HepG2 (cell line): ENCODE measurements at regions of chrX and their contacts with region 1.

Region 1: GRCh38 chrX:48737213-48737938 is 24.2 kb upstream of the GLOD5 start:
- DNase-seq: peak; percentile 95
- ATAC-seq: peak; percentile 98
- H3K4me3 ChIP-seq: peak overlapping the region; percentile 41 to 72 (median 61); a peak in 5 of 6 replicates
- H3K27ac ChIP-seq: peak overlapping the region; percentile 85
- H3K4me1 ChIP-seq: peaks cover 28% of the 10 kb centered on the region
- H3K27me3 ChIP-seq: no peaks in the 10 kb centered on the region
- CTCF ChIP-seq: no peak
- EP300 ChIP-seq: no peak
- POLR2A ChIP-seq: peak; percentile 54 to 59; a peak in 2 of 4 replicates
- RAD21 ChIP-seq: no peak

Region 2: GRCh38 chrX:48451708-48452107 is 285.7 kb before region 1 on chrX:
- CTCF ChIA-PET with region 1: no interaction called
- POLR2A ChIA-PET with region 1: no interaction called
- in situ Hi-C with region 1: no loop called
- intact Hi-C with region 1: no loop called
- DNase-seq: no peak
- ATAC-seq: no peak
- H3K4me3 ChIP-seq: no peak overlapping the region
- H3K27ac ChIP-seq: no peak overlapping the region
- H3K4me1 ChIP-seq: no peaks in the 10 kb centered on the region
- H3K27me3 ChIP-seq: no peaks in the 10 kb centered on the region
- CTCF ChIP-seq: no peak
- EP300 ChIP-seq: no peak
- POLR2A ChIP-seq: no peak
- RAD21 ChIP-seq: no peak

Region 3: GRCh38 chrX:48676106-48676892 is 61.1 kb before region 1 on chrX:
- CTCF ChIA-PET with region 1: no interaction called
- POLR2A ChIA-PET with region 1: interaction called, 36 read pairs
- in situ Hi-C with region 1: no loop called
- intact Hi-C with region 1: no loop called
- DNase-seq: peak; percentile 84
- ATAC-seq: peak; percentile 88
- H3K4me3 ChIP-seq: peak overlapping the region; percentile 69 to 93 (median 87)
- H3K27ac ChIP-seq: peak overlapping the region; percentile 98
- H3K4me1 ChIP-seq: peaks cover 23% of the 10 kb centered on the region
- H3K27me3 ChIP-seq: no peaks in the 10 kb centered on the region
- CTCF ChIP-seq: no peak
- EP300 ChIP-seq: no peak
- POLR2A ChIP-seq: peak; percentile 78 to 87
- RAD21 ChIP-seq: no peak

Region 4: GRCh38 chrX:48696301-48697181 is 40.8 kb before region 1 on chrX and contains the start of gene SUV39H1:
- CTCF ChIA-PET with region 1: no interaction called
- POLR2A ChIA-PET with region 1: interaction called, 11 read pairs
- in situ Hi-C with region 1: no loop called
- intact Hi-C with region 1: no loop called
- DNase-seq: peak; percentile 71
- ATAC-seq: peak; percentile 94
- H3K4me3 ChIP-seq: peak within 1 kb of the TSS; percentile 54 to 75 (median 62)
- H3K27ac ChIP-seq: peak within 1 kb of the TSS; percentile 65
- H3K4me1 ChIP-seq: peaks cover 17% of the 10 kb centered on the region
- H3K27me3 ChIP-seq: no peaks in the 10 kb centered on the region
- CTCF ChIP-seq: no peak
- EP300 ChIP-seq: no peak
- POLR2A ChIP-seq: peak; percentile 52 to 74
- RAD21 ChIP-seq: no peak
- total RNA-seq, gene SUV39H1: 9.9 and 10.1 TPM in 2 replicates

Region 5: DNA sequence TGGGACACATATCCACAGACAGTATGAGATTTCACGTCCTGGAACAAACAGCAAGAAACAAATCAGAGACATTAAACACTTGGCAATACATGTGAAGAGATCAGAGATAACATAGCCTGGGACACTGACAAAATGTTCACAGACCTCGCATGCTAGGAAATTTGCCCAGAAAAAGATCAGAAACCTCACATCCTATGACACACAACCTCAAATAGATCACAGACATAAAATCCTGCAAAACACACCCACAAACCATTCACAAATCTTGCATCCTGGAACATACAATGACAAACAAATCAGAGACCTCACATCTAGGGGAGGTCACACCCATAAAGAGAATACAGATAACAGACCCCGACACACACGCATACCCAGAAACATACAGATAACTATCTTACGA is 22.8 kb before region 1 on chrX:
- CTCF ChIA-PET with region 1: no interaction called
- POLR2A ChIA-PET with region 1: interaction called, 42 read pairs
- in situ Hi-C with region 1: no loop called
- intact Hi-C with region 1: loop called (anchors 1 kb)
- DNase-seq: no peak
- ATAC-seq: no peak
- H3K4me3 ChIP-seq: no peak overlapping the region
- H3K27ac ChIP-seq: peak overlapping the region; percentile 100
- H3K4me1 ChIP-seq: peaks cover 81% of the 10 kb centered on the region
- H3K27me3 ChIP-seq: no peaks in the 10 kb centered on the region; a peak in 1 of 5 replicates
- CTCF ChIP-seq: no peak
- EP300 ChIP-seq: no peak
- POLR2A ChIP-seq: no peak
- RAD21 ChIP-seq: no peak

Region 6: GRCh38 chrX:48751343-48751742 is 14.0 kb after region 1 on chrX:
- CTCF ChIA-PET with region 1: no interaction called
- POLR2A ChIA-PET with region 1: interaction called, 12 read pairs
- in situ Hi-C with region 1: no loop called
- intact Hi-C with region 1: no loop called
- DNase-seq: no peak
- ATAC-seq: no peak
- H3K4me3 ChIP-seq: no peak overlapping the region
- H3K27ac ChIP-seq: no peak overlapping the region
- H3K4me1 ChIP-seq: peaks cover 52% of the 10 kb centered on the region
- H3K27me3 ChIP-seq: no peaks in the 10 kb centered on the region
- CTCF ChIP-seq: no peak
- EP300 ChIP-seq: no peak
- POLR2A ChIP-seq: no peak
- RAD21 ChIP-seq: no peak

Region 7: GRCh38 chrX:48801280-48802088 is 64.1 kb after region 1 on chrX and contains the start of gene HDAC6:
- CTCF ChIA-PET with region 1: no interaction called
- POLR2A ChIA-PET with region 1: interaction called, 10 read pairs
- in situ Hi-C with region 1: no loop called
- intact Hi-C with region 1: no loop called
- DNase-seq: peak; percentile 95
- ATAC-seq: peak; percentile 91
- H3K4me3 ChIP-seq: peak within 1 kb of the TSS; percentile 80 to 84 (median 81)
- H3K27ac ChIP-seq: peak within 1 kb of the TSS; percentile 98
- H3K4me1 ChIP-seq: peaks cover 38% of the 10 kb centered on the region
- H3K27me3 ChIP-seq: no peaks in the 10 kb centered on the region; a peak in 1 of 5 replicates
- CTCF ChIP-seq: no peak
- EP300 ChIP-seq: no peak
- POLR2A ChIP-seq: peak in 1 of 2 experiments; percentile 44; a peak in 2 of 4 replicates
- RAD21 ChIP-seq: no peak
- total RNA-seq, gene HDAC6: 57.8 and 80.4 TPM in 2 replicates

Region 8: DNA sequence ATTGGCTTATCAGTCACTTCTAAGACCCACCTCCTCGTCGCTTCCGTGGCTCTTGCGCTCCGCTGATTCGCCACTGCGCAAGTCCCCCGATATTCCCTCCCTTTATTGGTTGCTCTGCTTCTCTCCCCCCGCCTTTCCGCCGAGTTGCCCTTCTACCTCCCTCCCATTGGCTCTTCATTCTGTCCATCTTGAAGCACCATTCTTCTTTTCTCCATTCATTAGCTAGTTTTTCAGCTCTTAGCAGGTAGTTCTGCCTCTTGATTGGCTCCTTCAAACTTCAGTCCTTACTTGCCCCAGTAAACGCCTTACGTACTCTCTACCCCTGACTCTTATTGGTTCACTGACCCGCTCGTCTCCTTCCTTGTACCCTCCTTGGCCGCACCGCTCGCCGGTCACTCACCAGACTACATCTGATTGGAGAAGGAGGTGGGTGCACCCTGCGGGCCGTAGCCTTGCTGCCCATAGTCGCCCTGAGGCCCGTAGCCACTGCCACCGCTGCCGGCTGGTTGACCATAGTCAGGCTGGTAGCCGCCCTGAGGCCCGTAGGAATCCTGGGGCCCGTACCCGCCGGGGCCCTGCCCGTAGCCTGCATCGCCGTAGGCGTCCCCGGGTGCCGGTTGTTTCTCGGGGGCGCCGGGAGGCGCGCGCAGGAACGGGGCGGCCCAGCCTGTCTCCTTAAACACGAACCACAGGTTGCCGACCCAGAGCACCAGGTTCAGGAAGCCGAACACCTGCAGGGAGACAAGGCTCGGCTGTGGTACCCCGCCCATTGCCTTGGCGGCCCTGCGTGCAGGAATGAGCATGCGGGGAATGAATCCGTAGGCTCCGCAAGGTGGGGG is 453.9 kb after region 1 on chrX:
- CTCF ChIA-PET with region 1: no interaction called
- POLR2A ChIA-PET with region 1: no interaction called
- in situ Hi-C with region 1: no loop called
- intact Hi-C with region 1: loop called (anchors 5 kb)
- DNase-seq: peak; percentile 98
- ATAC-seq: peak; percentile 95
- H3K4me3 ChIP-seq: peak overlapping the region; percentile 64 to 80 (median 78); a peak in 5 of 6 replicates
- H3K27ac ChIP-seq: peak overlapping the region; percentile 84
- H3K4me1 ChIP-seq: peaks cover 60% of the 10 kb centered on the region
- H3K27me3 ChIP-seq: no peaks in the 10 kb centered on the region
- CTCF ChIP-seq: no peak
- EP300 ChIP-seq: no peak
- POLR2A ChIP-seq: peak in 1 of 2 experiments; percentile 76; a peak in 2 of 4 replicates
- RAD21 ChIP-seq: no peak